ENCODE measurements at regions of chr10 and their contacts with region 1.

Region 1: GRCh38 chr10:16828114-16828568 is 10.9 kb upstream of the RSU1 start:
- DNase-seq: peak; percentile 83
- ATAC-seq: peak; percentile 83
- H3K4me3 ChIP-seq: no peak overlapping the region
- H3K27ac ChIP-seq: no peak overlapping the region
- H3K4me1 ChIP-seq: peaks cover 2% of the 10 kb centered on the region; the same call in 1 of the 2 replicates
- H3K27me3 ChIP-seq: no peaks in the 10 kb centered on the region
- CTCF ChIP-seq: peak; percentile 70
- POLR2A ChIP-seq: no peak
- RAD21 ChIP-seq: peak; percentile 78

Region 2: GRCh38 chr10:17257466-17258321 is 429.6 kb after region 1 on chr10:
- CTCF ChIA-PET with region 1: interaction called, 7 read pairs
- POLR2A ChIA-PET with region 1: no interaction called
- dilution Hi-C with region 1: no loop called
- in situ Hi-C with region 1: no loop called
- intact Hi-C with region 1: loop called (anchors 1 kb)
- DNase-seq: peak; percentile 78
- ATAC-seq: peak; percentile 98
- H3K4me3 ChIP-seq: peak overlapping the region; percentile 37; the same call in 1 of the 2 replicates
- H3K27ac ChIP-seq: peak overlapping the region; percentile 18; the same call in 1 of the 2 replicates
- H3K4me1 ChIP-seq: no peaks in the 10 kb centered on the region
- H3K27me3 ChIP-seq: no peaks in the 10 kb centered on the region
- CTCF ChIP-seq: peak; percentile 94
- POLR2A ChIP-seq: no peak
- RAD21 ChIP-seq: peak; percentile 97

Region 3: GRCh38 chr10:17430647-17431355 is 602.7 kb after region 1 on chr10:
- CTCF ChIA-PET with region 1: no interaction called
- POLR2A ChIA-PET with region 1: no interaction called
- dilution Hi-C with region 1: no loop called
- in situ Hi-C with region 1: loop called (anchors 5 kb)
- intact Hi-C with region 1: loop called (anchors 1 kb)
- DNase-seq: peak; percentile 73
- ATAC-seq: peak; percentile 97
- H3K4me3 ChIP-seq: no peak overlapping the region
- H3K27ac ChIP-seq: no peak overlapping the region
- H3K4me1 ChIP-seq: peaks cover 2% of the 10 kb centered on the region; the same call in 1 of the 2 replicates
- H3K27me3 ChIP-seq: peaks cover 26% of the 10 kb centered on the region
- CTCF ChIP-seq: peak; percentile 83
- POLR2A ChIP-seq: no peak
- RAD21 ChIP-seq: peak; percentile 80

Region 4: DNA sequence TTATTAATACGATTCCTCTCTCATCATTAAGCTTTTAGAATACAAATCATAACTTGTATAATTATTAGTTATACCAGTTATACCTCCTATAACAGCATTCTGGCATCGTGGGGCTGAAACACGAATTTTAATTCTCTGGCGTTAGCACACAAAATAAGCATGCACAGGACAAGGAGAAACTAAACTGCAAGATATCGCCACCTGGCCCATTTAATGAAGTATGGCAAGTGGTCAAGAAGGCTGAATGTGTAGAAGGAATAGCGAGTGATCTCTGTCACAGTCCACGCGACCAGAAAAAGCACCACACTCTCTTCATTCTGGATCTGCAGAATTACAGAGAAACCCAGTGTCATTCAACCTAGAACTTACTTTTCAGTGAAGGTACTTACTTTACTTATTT is 770.9 kb after region 1 on chr10:
- CTCF ChIA-PET with region 1: interaction called, 5 read pairs
- POLR2A ChIA-PET with region 1: no interaction called
- dilution Hi-C with region 1: no loop called
- in situ Hi-C with region 1: loop called (anchors 25 kb)
- intact Hi-C with region 1: loop called (anchors 2 kb)
- DNase-seq: peak; percentile 55
- ATAC-seq: peak; percentile 27; the same call in 1 of the 2 replicates
- H3K4me3 ChIP-seq: no peak overlapping the region
- H3K27ac ChIP-seq: no peak overlapping the region
- H3K4me1 ChIP-seq: no peaks in the 10 kb centered on the region
- H3K27me3 ChIP-seq: no peaks in the 10 kb centered on the region
- CTCF ChIP-seq: peak; percentile 46
- POLR2A ChIP-seq: no peak
- RAD21 ChIP-seq: peak; percentile 58

Region 5: GRCh38 chr10:17617031-17617911 is 789.1 kb after region 1 on chr10 and contains the start of gene HACD1:
- CTCF ChIA-PET with region 1: interaction called, 4 read pairs
- POLR2A ChIA-PET with region 1: interaction called, 13 read pairs
- dilution Hi-C with region 1: no loop called
- in situ Hi-C with region 1: loop called (anchors 25 kb)
- intact Hi-C with region 1: no loop called
- DNase-seq: peak; percentile 75
- ATAC-seq: peak; percentile 87
- H3K4me3 ChIP-seq: peak within 1 kb of the TSS; percentile 61
- H3K27ac ChIP-seq: peak within 1 kb of the TSS; percentile 78
- H3K4me1 ChIP-seq: no peaks in the 10 kb centered on the region
- H3K27me3 ChIP-seq: no peaks in the 10 kb centered on the region
- CTCF ChIP-seq: peak; percentile 19; the same call in 1 of the 2 replicates
- POLR2A ChIP-seq: 0 out of 2 replicates have a peak, but pooled peaks have one; percentile 33
- RAD21 ChIP-seq: no peak
- total RNA-seq, gene HACD1: 10.0 and 23.6 TPM in 2 replicates

Region 6: DNA sequence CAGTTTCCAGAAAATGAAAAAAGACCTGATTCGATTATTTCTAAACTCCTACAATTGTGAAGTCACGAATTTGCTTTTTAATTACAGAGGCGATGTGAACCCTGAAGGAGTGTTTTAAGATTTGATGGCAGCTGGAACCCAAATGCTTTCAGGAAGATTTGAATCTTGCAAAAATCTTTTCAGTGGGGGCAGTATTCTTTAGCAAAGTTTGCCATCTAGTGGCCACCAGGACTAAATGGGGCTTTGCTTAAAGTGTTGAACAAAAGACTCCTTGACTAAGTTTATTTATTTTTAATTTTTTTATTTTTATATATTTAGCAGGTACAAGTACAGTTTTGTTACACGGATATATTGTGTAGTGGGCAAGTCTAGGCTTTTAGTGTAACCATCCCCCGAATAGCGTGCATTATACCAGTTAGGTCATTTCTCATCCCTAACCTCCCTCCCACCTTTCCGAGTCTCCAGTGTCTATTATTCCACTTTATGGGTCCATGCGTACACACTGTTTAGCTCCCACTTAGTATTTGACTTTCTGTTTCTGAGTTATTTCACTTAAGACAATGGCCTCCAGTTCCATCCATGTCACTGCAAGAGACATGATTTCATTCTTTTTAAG is 1410.8 kb after region 1 on chr10:
- CTCF ChIA-PET with region 1: no interaction called
- POLR2A ChIA-PET with region 1: no interaction called
- dilution Hi-C with region 1: no loop called
- in situ Hi-C with region 1: loop called (anchors 25 kb)
- intact Hi-C with region 1: no loop called
- DNase-seq: peak; percentile 70
- ATAC-seq: peak; percentile 84
- H3K4me3 ChIP-seq: no peak overlapping the region
- H3K27ac ChIP-seq: no peak overlapping the region
- H3K4me1 ChIP-seq: peaks cover 2% of the 10 kb centered on the region; the same call in 1 of the 2 replicates
- H3K27me3 ChIP-seq: peaks cover 2% of the 10 kb centered on the region; the same call in 1 of the 2 replicates
- CTCF ChIP-seq: peak; percentile 77
- POLR2A ChIP-seq: no peak
- RAD21 ChIP-seq: peak; percentile 84